ENCODE measurements at regions of chr2 and their contacts with region 1.

Region 1: GRCh38 chr2:29295857-29296256 is 180.6 kb downstream of the CLIP4 start:
- DNase-seq: no peak
- H3K4me3 ChIP-seq: no peak overlapping the region
- H3K27ac ChIP-seq: no peak overlapping the region
- H3K4me1 ChIP-seq: no peaks in the 10 kb centered on the region
- H3K27me3 ChIP-seq: no peaks in the 10 kb centered on the region
- CTCF ChIP-seq: peak; percentile 39 to 65

Region 2: GRCh38 chr2:29238497-29238896 is 57.4 kb before region 1 on chr2:
- CTCF ChIA-PET with region 1: no interaction called
- dilution Hi-C with region 1: no loop called
- in situ Hi-C with region 1: no loop called
- intact Hi-C with region 1: loop called (anchors 2 kb)
- DNase-seq: peak; percentile 40
- H3K4me3 ChIP-seq: no peak overlapping the region
- H3K27ac ChIP-seq: no peak overlapping the region
- H3K4me1 ChIP-seq: no peaks in the 10 kb centered on the region
- H3K27me3 ChIP-seq: no peaks in the 10 kb centered on the region
- CTCF ChIP-seq: peak; percentile 92 to 93

Region 3: GRCh38 chr2:29923110-29923721 is 627.4 kb after region 1 on chr2:
- CTCF ChIA-PET with region 1: interaction called, 3 read pairs
- dilution Hi-C with region 1: no loop called
- in situ Hi-C with region 1: no loop called
- intact Hi-C with region 1: loop called (anchors 2 kb)
- DNase-seq: peak; percentile 39
- H3K4me3 ChIP-seq: no peak overlapping the region
- H3K27ac ChIP-seq: no peak overlapping the region
- H3K4me1 ChIP-seq: peaks cover 6% of the 10 kb centered on the region
- H3K27me3 ChIP-seq: peaks cover 25% of the 10 kb centered on the region
- CTCF ChIP-seq: peak; percentile 92 to 93

Region 4: GRCh38 chr2:30026087-30027055 is 730.5 kb after region 1 on chr2:
- CTCF ChIA-PET with region 1: no interaction called
- dilution Hi-C with region 1: no loop called
- in situ Hi-C with region 1: no loop called
- intact Hi-C with region 1: loop called (anchors 1 kb)
- DNase-seq: peak; percentile 95
- H3K4me3 ChIP-seq: no peak overlapping the region
- H3K27ac ChIP-seq: no peak overlapping the region
- H3K4me1 ChIP-seq: peaks cover 13% of the 10 kb centered on the region
- H3K27me3 ChIP-seq: no peaks in the 10 kb centered on the region
- CTCF ChIP-seq: peak; percentile 63 to 81

Measured in mammary epithelial cell (primary cell).